CD8-positive, alpha-beta T cell (primary cell): ENCODE measurements at regions of chr10 and their contacts with region 1.

Region 1: DNA sequence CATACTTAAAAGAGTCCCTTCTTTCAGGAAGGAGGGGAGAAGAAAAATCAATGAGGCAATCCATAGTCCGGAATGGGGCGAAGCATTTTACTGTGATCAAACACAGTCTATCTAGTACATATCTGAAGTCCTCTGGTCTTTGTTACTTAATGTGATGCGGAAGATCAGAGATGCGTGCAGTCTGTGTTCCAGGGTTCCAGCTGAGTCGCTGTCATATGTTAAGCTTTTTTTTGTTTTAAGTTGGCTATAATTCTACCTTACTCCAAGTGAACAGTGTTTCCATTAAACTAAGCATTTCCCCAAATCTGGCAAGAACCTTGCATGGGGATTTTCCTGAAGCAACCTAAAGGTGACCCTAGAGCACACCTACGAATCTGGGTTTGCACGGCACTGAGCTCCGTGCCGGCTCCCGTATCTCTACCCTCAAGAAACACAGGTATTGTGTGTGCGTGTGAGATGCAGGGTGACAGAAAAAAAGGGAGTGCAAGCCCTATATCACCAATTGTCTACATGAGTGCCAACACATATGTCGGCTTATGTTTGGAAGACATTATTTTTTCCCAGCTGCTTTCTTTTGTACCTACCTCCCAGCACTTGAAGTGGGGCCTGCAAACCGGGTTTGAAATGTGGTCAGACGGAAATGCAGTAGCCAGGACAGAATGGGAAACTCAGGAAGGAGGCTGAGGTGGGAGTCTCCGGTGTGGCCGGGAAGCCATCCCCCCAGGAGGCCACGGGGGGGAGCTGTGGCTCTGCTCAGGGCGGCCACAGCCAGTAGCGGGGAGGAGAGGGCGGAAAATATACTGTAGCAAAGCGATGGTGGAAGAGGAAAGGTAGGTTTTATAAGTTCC is 435.8 kb upstream of the MGMT start:
- DNase-seq: peak in 8 of 9 experiments; percentile 40 to 76 (median 60)
- ATAC-seq: peak; percentile 48
- H3K4me3 ChIP-seq: no peak overlapping the region
- H3K4me3 Mint-ChIP-seq: no peak overlapping the region
- H3K27ac ChIP-seq: no peak overlapping the region
- H3K27ac Mint-ChIP-seq: no peak overlapping the region
- H3K4me1 ChIP-seq: peaks cover 34% of the 10 kb centered on the region
- H3K4me1 Mint-ChIP-seq: peaks cover 33% of the 10 kb centered on the region
- H3K27me3 ChIP-seq: no peaks in the 10 kb centered on the region
- H3K27me3 Mint-ChIP-seq: peaks cover 3% of the 10 kb centered on the region
- CTCF ChIP-seq: peak; percentile 86

Region 2: GRCh38 chr10:129042776-129043595 is 11.8 kb after region 1 on chr10:
- CTCF ChIA-PET with region 1: interaction called, 17 read pairs
- POLR2A ChIA-PET with region 1: no interaction called
- intact Hi-C with region 1: no loop called
- DNase-seq: peak in 4 of 9 experiments; percentile 25 to 59 (median 43)
- ATAC-seq: peak; percentile 36
- H3K4me3 ChIP-seq: peak overlapping the region in 1 of 2 experiments; percentile 22
- H3K4me3 Mint-ChIP-seq: peak overlapping the region; percentile 67
- H3K27ac ChIP-seq: no peak overlapping the region
- H3K27ac Mint-ChIP-seq: no peak overlapping the region
- H3K4me1 ChIP-seq: peaks cover 28% of the 10 kb centered on the region
- H3K4me1 Mint-ChIP-seq: peaks cover 22% of the 10 kb centered on the region
- H3K27me3 ChIP-seq: no peaks in the 10 kb centered on the region
- H3K27me3 Mint-ChIP-seq: peaks cover 10% of the 10 kb centered on the region
- CTCF ChIP-seq: no peak

Region 3: GRCh38 chr10:129332476-129332875 is 301.3 kb after region 1 on chr10:
- CTCF ChIA-PET with region 1: interaction called, 59 read pairs
- POLR2A ChIA-PET with region 1: interaction called, 4 read pairs
- intact Hi-C with region 1: loop called in 1 of 2 experiments (anchors 1 kb)
- DNase-seq: peak in 3 of 9 experiments; percentile 15 to 55 (median 32)
- ATAC-seq: no peak
- H3K4me3 ChIP-seq: no peak overlapping the region
- H3K4me3 Mint-ChIP-seq: no peak overlapping the region
- H3K27ac ChIP-seq: no peak overlapping the region
- H3K27ac Mint-ChIP-seq: no peak overlapping the region
- H3K4me1 ChIP-seq: peaks cover 5% of the 10 kb centered on the region
- H3K4me1 Mint-ChIP-seq: no peaks in the 10 kb centered on the region
- H3K27me3 ChIP-seq: no peaks in the 10 kb centered on the region
- H3K27me3 Mint-ChIP-seq: peaks cover 11% of the 10 kb centered on the region
- CTCF ChIP-seq: peak; percentile 30

Region 4: DNA sequence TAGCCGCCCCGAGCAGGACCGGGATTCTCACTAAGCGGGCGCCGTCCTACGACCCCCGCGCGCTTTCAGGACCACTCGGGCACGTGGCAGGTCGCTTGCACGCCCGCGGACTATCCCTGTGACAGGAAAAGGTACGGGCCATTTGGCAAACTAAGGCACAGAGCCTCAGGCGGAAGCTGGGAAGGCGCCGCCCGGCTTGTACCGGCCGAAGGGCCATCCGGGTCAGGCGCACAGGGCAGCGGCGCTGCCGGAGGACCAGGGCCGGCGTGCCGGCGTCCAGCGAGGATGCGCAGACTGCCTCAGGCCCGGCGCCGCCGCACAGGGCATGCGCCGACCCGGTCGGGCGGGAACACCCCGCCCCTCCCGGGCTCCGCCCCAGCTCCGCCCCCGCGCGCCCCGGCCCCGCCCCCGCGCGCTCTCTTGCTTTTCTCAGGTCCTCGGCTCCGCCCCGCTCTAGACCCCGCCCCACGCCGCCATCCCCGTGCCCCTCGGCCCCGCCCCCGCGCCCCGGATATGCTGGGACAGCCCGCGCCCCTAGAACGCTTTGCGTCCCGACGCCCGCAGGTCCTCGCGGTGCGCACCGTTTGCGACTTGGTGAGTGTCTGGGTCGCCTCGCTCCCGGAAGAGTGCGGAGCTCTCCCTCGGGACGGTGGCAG is 435.6 kb after region 1 on chr10 and contains the start of gene MGMT:
- CTCF ChIA-PET with region 1: no interaction called
- POLR2A ChIA-PET with region 1: interaction called, 4 read pairs
- intact Hi-C with region 1: loop called (anchors 2 to 5 kb)
- DNase-seq: peak; percentile 96 to 99 (median 98)
- ATAC-seq: peak; percentile 98
- H3K4me3 ChIP-seq: peak within 1 kb of the TSS; percentile 83 to 89
- H3K4me3 Mint-ChIP-seq: peak within 1 kb of the TSS; percentile 85
- H3K27ac ChIP-seq: peak within 1 kb of the TSS; percentile 63 to 78
- H3K27ac Mint-ChIP-seq: peak within 1 kb of the TSS; percentile 86
- H3K4me1 ChIP-seq: peaks cover 17% of the 10 kb centered on the region
- H3K4me1 Mint-ChIP-seq: peaks cover 27% of the 10 kb centered on the region
- H3K27me3 ChIP-seq: no peaks in the 10 kb centered on the region
- H3K27me3 Mint-ChIP-seq: no peaks in the 10 kb centered on the region
- CTCF ChIP-seq: no peak
- total RNA-seq, gene MGMT: 6.4 to 7.0 TPM

Region 5: DNA sequence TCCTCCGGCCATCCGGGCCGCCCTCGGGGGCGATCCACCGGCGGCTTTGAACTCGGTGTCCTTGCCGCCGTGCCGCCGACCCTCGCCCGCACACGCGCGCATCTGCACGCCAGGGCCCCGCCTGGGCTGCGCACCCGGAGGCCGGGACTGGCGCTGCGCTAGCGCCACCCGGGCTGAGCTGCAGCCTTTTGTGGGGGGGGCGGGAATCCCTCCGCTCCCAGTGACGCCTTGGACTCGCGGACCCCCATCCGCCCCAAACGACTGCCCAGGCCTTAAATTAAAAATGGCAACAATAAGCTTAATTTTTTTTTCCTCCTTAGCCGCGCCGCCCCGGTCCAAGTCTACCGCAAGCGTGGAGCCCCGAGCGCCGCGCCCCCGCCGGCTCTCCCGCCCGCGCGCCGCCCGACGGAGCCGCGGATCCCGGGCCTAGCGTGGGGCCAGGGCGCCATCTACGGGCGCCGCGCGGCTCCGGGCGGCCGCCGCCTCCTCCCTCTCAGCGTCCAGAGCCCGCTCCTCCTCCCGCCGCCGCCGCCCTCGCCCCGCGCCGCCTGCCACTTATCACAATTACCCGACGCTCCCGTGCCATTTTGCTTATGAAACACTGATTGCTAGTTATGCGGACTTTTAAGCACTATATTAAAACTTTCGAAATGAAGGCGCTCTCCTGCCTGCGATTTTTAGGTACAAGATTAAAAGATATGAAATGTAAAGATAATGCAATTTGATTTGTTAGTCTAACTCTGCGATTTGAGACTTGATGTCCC is 940.3 kb after region 1 on chr10:
- CTCF ChIA-PET with region 1: interaction called, 3 read pairs
- POLR2A ChIA-PET with region 1: no interaction called
- intact Hi-C with region 1: loop called in 1 of 2 experiments (anchors 5 kb)
- DNase-seq: peak in 2 of 9 experiments; percentile 46 to 59
- ATAC-seq: peak; percentile 48
- H3K4me3 ChIP-seq: no peak overlapping the region
- H3K4me3 Mint-ChIP-seq: peak overlapping the region; percentile 70
- H3K27ac ChIP-seq: no peak overlapping the region
- H3K27ac Mint-ChIP-seq: no peak overlapping the region
- H3K4me1 ChIP-seq: peaks cover 8% of the 10 kb centered on the region
- H3K4me1 Mint-ChIP-seq: peaks cover 13% of the 10 kb centered on the region
- H3K27me3 ChIP-seq: peaks cover 24 to 54% of the 10 kb centered on the region in 2 experiments
- H3K27me3 Mint-ChIP-seq: peaks cover 52% of the 10 kb centered on the region
- CTCF ChIP-seq: no peak

Region 6: GRCh38 chr10:130179640-130180039 is 1148.4 kb after region 1 on chr10:
- CTCF ChIA-PET with region 1: no interaction called
- POLR2A ChIA-PET with region 1: no interaction called
- intact Hi-C with region 1: loop called in 1 of 2 experiments (anchors 5 kb)
- DNase-seq: peak in 7 of 9 experiments; percentile 23 to 63 (median 37)
- ATAC-seq: peak; percentile 85
- H3K4me3 ChIP-seq: no peak overlapping the region
- H3K4me3 Mint-ChIP-seq: no peak overlapping the region
- H3K27ac ChIP-seq: no peak overlapping the region
- H3K27ac Mint-ChIP-seq: peak overlapping the region; percentile 41
- H3K4me1 ChIP-seq: no peaks in the 10 kb centered on the region
- H3K4me1 Mint-ChIP-seq: peaks cover 6% of the 10 kb centered on the region
- H3K27me3 ChIP-seq: no peaks in the 10 kb centered on the region
- H3K27me3 Mint-ChIP-seq: no peaks in the 10 kb centered on the region
- CTCF ChIP-seq: peak; percentile 42